Mucosa of descending colon (tissue), 3 donors: ENCODE measurements at regions of chr19 and their contacts with region 1.

Region 1: GRCh38 chr19:43532962-43533545 is at the start of gene ZNF575:
- DNase-seq: peak; percentile 92 to 94 (median 94)
- ATAC-seq: peak; percentile 82
- H3K4me3 ChIP-seq: peak within 1 kb of the TSS; percentile 21
- H3K4me1 ChIP-seq: peaks cover 31% of the 10 kb centered on the region
- CTCF ChIP-seq: no peak
- total RNA-seq, gene ZNF575: 9.1 to 18.2 (median 9.6) TPM

Region 2: GRCh38 chr19:43545981-43546380 is 12.9 kb after region 1 on chr19:
- intact Hi-C with region 1: no loop called
- DNase-seq: no peak
- ATAC-seq: no peak
- H3K4me3 ChIP-seq: no peak overlapping the region
- H3K4me1 ChIP-seq: no peaks in the 10 kb centered on the region
- CTCF ChIP-seq: no peak

Region 3: DNA sequence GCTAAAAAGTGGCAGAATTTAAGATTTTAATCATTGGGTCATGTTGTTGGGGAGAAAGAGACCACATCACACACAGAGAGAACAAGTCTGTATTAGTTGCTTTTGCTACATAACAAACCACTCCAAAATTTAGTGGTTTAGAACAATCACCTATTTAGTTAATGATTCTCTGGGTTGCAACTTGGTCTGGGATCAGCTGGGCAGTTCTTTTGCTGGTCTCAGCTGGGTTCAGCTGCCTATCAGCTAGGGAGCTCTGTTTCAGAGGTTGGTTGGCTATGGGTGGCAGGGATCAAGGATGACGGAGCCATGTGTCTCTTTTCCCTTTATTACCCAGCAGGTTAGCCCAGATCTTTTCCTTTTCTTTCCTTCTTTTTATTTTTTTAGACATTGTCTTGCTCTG is 51.4 kb after region 1 on chr19:
- intact Hi-C with region 1: no loop called
- DNase-seq: no peak
- ATAC-seq: no peak
- H3K4me3 ChIP-seq: no peak overlapping the region
- H3K4me1 ChIP-seq: no peaks in the 10 kb centered on the region
- CTCF ChIP-seq: no peak

Region 4: GRCh38 chr19:43595999-43596841 is 63.2 kb after region 1 on chr19 and contains the starts of genes IRGQ and ZNF576:
- intact Hi-C with region 1: loop called in 1 of 2 experiments (anchors 2 kb)
- DNase-seq: peak; percentile 100
- ATAC-seq: peak; percentile 92
- H3K4me3 ChIP-seq: peak within 1 kb of the TSS; percentile 29
- H3K4me1 ChIP-seq: peaks cover 36% of the 10 kb centered on the region
- CTCF ChIP-seq: peak; percentile 22
- total RNA-seq, gene IRGQ: 18.9 to 29.4 (median 21.9) TPM
- total RNA-seq, gene ZNF576: 15.4 to 18.9 (median 16.3) TPM

Region 5: DNA sequence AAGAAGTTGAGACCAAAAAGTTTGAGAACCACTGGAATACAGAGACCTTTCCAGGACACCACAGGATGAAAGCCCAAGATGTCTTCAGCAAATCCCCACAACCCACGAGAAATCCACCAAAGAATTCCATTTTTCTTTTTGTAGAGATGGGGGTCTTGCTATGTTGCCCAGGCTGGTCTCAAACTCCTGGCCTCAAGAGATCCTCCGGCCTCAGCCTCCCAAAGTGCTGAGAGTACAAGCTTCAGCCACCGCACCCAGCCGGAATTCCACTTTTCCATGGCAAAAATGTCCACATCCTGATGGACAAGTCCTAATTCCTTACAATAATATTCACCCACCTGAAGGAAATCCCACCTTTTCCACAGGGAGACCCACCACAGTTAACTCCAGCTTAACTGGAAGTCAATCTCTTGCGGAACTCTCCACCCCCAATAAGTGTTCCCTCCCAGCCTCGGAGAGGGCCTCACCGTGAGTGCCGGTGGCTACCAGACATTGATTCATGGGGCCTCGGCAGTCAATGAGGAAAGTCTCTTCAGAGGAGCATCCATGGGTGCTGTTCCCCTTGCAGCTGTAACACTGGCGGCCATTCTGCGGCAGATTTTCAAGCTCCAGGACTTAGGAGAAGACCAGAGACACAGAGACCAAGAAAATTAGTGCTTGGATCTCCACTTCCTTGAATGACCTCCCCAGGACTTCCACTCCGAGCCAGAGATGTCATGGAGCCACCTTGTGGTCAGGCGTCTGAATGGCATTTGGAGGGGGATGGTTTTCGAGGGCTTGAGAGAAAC is 118.9 kb after region 1 on chr19:
- intact Hi-C with region 1: loop called in 1 of 2 experiments (anchors 10 kb)
- DNase-seq: peak in 2 of 3 donors; percentile 76
- ATAC-seq: peak; percentile 88
- H3K4me3 ChIP-seq: no peak overlapping the region
- H3K4me1 ChIP-seq: no peaks in the 10 kb centered on the region
- CTCF ChIP-seq: peak; percentile 54